Lower leg skin (tissue), 4 donors: ENCODE measurements at regions of chr1 and their contacts with region 1.

Region 1: DNA sequence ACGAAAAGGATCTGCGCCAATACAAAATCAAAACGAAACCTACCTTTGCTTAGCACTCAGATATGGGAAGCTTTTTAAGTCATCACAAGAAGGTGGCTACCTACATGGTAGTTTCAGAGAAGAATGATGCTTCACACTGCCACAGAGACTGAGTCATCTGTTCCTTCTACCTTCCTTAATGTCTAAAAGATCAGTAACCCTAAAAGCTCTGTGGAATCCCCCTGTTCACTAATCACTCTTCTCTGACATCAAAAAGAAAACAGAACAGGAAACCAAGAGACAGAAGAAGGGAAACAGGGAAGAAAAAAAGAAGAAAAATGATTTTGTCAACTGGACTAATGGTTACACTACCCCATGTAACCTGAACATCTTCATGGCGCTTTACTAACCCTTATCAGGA is 177.2 kb downstream of the SMYD3 start:
- DNase-seq: no peak
- H3K4me3 ChIP-seq: no peak overlapping the region
- CTCF ChIP-seq: no peak
- POLR2A ChIP-seq: no peak

Region 2: GRCh38 chr1:246012341-246012740 is 317.6 kb before region 1 on chr1:
- intact Hi-C with region 1: no loop called
- DNase-seq: no peak
- H3K4me3 ChIP-seq: no peak overlapping the region
- CTCF ChIP-seq: no peak
- POLR2A ChIP-seq: no peak

Region 3: DNA sequence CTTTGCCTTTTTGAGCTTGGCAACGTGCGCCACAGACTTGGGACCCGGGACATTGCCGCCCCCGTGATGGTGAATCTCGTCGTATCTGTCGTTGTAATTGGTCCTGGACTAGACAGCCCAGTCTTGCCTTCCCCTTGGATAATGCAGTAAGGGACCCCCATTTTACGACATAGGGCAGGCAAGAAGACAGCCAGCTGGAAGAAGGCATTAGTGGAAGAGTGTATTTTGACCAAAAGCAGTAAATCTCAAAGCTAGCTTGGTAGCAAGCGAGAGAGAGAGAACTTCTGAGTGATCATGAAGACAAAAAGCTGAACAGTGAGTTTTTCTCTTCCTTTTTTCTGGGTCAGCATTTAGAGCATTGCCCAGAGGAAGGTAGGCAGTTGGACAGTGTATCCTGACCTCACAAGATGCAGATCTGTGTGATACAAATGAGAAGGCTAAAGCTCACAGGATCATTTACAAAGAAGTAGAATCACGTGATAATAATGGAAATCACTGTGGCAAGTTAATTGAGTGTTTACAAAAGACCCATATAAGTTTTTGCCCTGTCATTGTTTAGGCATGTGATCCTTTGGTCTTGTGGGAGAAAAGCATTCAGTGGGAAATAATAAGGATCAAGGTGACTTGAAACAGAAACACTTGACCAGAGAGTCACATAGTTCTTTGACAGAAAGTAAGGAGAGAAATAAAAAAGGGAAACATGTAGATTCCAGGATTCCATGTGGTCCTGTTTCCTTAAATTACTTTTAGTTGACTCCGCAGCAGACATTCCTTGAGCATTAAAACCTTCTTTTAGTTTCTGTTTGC is 302.6 kb after region 1 on chr1:
- intact Hi-C with region 1: loop called (anchors 10 kb)
- DNase-seq: no peak
- H3K4me3 ChIP-seq: no peak overlapping the region
- CTCF ChIP-seq: no peak
- POLR2A ChIP-seq: no peak